ENCODE measurements at regions of chr14 and their contacts with region 1.

Region 1: GRCh38 chr14:57293866-57294837 is 25.4 kb downstream of the AP5M1 start:
- DNase-seq: peak; percentile 34
- H3K4me3 ChIP-seq: no peak overlapping the region
- H3K27ac ChIP-seq: no peak overlapping the region
- H3K4me1 ChIP-seq: no peaks in the 10 kb centered on the region
- H3K27me3 ChIP-seq: no peaks in the 10 kb centered on the region
- CTCF ChIP-seq: no peak
- POLR2A ChIP-seq: no peak

Region 2: DNA sequence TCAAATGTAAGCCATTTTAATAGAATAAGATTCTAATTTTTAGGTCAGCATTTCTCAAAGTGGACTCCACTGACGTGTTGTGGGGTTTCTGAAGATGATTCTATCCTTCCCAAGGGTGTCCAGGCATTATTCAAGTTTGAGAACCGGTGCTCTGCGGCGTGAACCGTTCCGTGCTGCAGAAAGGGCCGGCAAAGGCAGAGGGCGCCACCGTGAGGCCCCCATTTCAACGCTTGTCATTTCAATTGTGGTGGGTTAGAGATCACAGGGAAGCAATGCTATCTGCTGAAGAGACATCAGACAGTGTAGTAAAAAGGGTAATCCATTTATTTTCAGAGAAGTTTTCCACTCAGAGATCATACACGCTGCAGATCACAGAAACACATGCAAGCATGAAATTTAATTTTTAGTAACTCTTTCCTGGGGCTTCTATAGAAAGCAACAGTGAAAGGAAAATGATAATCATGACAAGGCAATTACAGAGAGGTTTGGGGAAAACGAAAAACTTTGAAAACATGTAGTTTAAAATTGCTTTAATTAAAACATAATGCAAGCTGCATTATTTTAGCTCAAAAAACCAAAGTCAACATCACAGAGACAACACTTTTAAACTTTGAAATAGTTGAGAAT is 227.2 kb before region 1 on chr14:
- CTCF ChIA-PET with region 1: interaction called, 3 read pairs
- POLR2A ChIA-PET with region 1: no interaction called
- dilution Hi-C with region 1: no loop called
- intact Hi-C with region 1: loop called (anchors 2 kb)
- DNase-seq: peak; percentile 37
- H3K4me3 ChIP-seq: no peak overlapping the region
- H3K27ac ChIP-seq: no peak overlapping the region
- H3K4me1 ChIP-seq: no peaks in the 10 kb centered on the region
- H3K27me3 ChIP-seq: peaks cover 4 to 17% of the 10 kb centered on the region in 2 experiments
- CTCF ChIP-seq: peak; percentile 57 to 68
- POLR2A ChIP-seq: no peak